ENCODE measurements at regions of chr11 and their contacts with region 1.

Region 1: GRCh38 chr11:117107701-117108590 is 9.7 kb upstream of the SIK3 start:
- DNase-seq: no peak
- ATAC-seq: no peak

Region 2: GRCh38 chr11:116879800-116880625 is 227.9 kb before region 1 on chr11:
- intact Hi-C with region 1: loop called (anchors 5 kb)
- DNase-seq: no peak
- ATAC-seq: peak; percentile 87

Measured in Right ventricle myocardium superior (tissue), 1 donor.